ENCODE measurements at regions of chr3 and their contacts with region 1.

Region 1: DNA sequence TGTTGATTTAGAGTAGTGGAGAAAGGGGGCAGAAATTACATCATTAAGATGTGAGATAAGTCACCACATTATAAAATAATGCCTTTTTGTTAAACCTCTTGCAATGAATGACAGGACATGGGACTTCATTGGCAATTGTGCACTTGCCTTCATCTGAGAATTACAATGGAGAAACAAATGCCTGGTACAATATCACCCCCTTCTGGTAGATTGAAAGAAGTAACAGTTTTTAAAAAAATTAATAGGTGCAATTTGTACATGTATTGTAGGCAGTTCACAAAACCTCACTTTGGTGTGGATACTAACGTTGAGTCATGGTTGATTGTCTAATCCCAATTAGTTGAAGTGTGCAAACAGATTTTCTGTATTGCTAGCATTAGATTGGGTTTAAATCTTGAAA is 4.6 kb upstream of the P2RY14 start:
- DNase-seq: no peak
- H3K4me3 ChIP-seq: no peak overlapping the region
- H3K27ac ChIP-seq: no peak overlapping the region
- H3K4me1 ChIP-seq: no peaks in the 10 kb centered on the region
- H3K27me3 ChIP-seq: no peaks in the 10 kb centered on the region
- CTCF ChIP-seq: peak; percentile 23 to 78 (median 78)
- POLR2A ChIP-seq: no peak

Region 2: DNA sequence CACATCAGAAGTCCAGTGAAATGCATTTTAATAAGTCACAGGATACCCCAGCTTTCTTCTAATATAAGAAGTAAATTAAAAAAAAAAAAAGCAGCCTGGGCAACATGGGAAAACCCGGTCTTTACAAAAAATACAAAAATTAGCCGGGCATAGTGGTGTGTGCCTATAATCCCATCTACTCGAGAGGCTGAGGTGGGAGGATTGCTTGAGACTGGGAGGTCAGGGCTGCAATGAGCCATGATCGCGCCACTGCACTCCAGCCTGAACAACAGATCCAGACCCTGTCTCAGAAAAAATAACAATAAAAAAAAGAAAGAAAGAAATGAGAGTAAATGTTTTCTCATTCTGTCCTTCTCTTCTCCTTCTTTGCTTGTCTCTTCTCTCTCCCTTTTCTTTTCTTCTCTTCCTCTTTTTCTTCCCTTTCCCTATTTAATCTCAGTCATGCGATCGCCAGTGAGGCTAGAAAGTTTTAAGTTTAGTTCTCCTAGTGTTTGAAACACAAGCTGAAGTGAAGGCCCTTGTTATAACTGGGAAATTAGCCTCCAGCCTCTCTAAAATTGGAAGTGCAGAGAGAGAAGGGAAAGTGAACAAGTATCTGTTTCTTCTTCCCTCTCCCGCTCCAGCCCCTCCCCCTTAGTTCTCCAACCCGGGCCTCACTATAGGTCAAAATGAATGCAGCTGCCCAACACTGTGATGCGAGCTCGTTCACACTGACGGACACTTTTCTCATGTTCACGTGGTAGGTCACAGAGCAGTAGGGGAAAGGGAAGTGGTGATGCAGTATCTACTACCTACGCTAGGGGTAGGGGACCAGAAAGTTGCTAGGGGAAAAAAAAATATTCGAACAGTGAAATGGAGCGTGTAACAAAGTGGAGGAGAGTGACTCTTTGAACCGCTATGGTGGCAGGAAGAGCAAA is 898.4 kb before region 1 on chr3:
- intact Hi-C with region 1: no loop called
- DNase-seq: no peak
- H3K4me3 ChIP-seq: no peak overlapping the region
- H3K27ac ChIP-seq: no peak overlapping the region
- H3K4me1 ChIP-seq: no peaks in the 10 kb centered on the region
- H3K27me3 ChIP-seq: no peaks in the 10 kb centered on the region
- CTCF ChIP-seq: no peak
- POLR2A ChIP-seq: no peak

Region 3: DNA sequence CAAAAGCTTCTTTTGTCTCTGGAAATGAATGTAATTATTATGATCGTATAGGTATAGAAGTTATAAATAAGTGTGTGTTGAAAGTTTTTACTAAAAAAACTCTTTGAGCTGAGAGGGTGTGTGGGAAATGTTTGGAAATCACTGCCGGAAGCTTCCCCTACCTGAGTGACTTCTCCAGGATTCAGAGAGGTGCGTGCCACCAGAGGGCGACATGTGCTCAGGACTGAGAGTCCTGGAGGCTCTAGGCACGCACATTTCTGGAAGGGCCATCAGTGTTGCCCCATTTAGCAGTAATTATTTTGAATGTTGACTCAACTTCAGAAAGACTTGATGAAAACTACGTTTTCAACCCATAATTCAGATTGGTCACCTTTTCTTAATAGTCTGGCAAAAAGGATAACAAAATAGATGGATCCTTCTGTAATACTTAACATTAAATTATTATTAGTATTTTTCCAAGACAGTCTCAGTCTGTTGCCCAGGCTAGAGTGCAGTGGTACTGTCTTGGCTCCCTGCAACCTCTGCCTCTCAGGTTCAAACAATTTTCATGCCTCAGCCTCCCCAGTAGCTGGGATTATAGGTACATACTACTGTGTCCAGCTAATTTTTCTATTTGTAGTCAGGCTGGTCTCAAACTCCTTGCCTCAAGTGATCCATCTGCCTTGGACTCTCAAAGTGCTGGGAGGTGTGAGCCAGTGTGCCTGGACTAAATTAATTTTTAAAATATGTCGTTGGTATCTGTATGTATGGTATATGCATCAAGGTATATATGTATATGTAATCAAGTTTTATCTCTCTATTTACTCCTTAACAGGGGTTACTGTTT is 114.4 kb before region 1 on chr3:
- intact Hi-C with region 1: loop called (anchors 5 kb)
- DNase-seq: peak; percentile 64
- H3K4me3 ChIP-seq: no peak overlapping the region
- H3K27ac ChIP-seq: no peak overlapping the region
- H3K4me1 ChIP-seq: no peaks in the 10 kb centered on the region
- H3K27me3 ChIP-seq: no peaks in the 10 kb centered on the region
- CTCF ChIP-seq: peak; percentile 62 to 68 (median 64)
- POLR2A ChIP-seq: no peak

Region 4: GRCh38 chr3:151227807-151228665 is 54.9 kb before region 1 on chr3:
- intact Hi-C with region 1: loop called (anchors 2 kb)
- DNase-seq: peak; percentile 53
- H3K4me3 ChIP-seq: no peak overlapping the region
- H3K27ac ChIP-seq: no peak overlapping the region
- H3K4me1 ChIP-seq: peaks cover 2% of the 10 kb centered on the region
- H3K27me3 ChIP-seq: no peaks in the 10 kb centered on the region
- CTCF ChIP-seq: peak; percentile 61 to 88 (median 86)
- POLR2A ChIP-seq: no peak

Region 5: DNA sequence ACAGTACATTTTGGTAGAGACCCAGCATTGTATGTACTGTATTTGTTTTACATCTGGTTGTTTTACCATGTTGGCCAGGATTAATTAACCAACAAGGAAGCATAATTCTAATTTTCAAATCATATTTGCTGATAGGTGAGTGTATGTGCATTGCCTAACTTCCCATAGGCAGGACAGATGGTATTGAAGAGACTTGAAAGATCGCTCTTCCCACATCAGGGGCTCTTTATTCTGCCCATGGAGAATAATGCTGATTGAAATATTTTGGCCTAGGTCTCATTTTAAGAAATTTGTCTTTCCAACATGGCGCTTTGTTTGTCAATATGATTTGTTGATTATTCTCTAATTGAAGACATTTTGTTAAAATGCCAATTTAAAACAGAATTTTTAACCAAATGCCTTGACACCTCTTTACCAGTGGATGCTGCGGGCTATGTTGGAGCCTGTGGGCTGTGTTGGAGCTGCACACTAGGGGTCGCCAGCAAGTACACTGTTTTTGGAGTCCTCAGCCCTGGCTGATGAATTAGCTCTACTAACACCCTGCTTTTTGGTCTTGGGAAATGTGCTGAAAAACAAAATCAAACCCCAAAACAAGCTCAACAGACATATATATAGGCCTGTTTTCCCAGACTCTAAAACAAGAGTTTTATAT is 96.3 kb after region 1 on chr3:
- intact Hi-C with region 1: no loop called
- DNase-seq: no peak
- H3K4me3 ChIP-seq: no peak overlapping the region
- H3K27ac ChIP-seq: no peak overlapping the region
- H3K4me1 ChIP-seq: no peaks in the 10 kb centered on the region
- H3K27me3 ChIP-seq: no peaks in the 10 kb centered on the region
- CTCF ChIP-seq: no peak
- POLR2A ChIP-seq: no peak

Measured in prostate gland (tissue), 2 donors.